Activated naive CD8-positive, alpha-beta T cell treated with anti-CD3 and anti-CD28 coated beads, Interleukin-2, amount 10 ng/mL, durations not matched to agents 7 days and 5 days (primary cell): ENCODE measurements at regions of chr22 and their contacts with region 1.

Region 1: GRCh38 chr22:46296257-46297150 is at the start of gene GTSE1:
- DNase-seq: peak; percentile 96
- ATAC-seq: peak; percentile 96
- H3K4me3 Mint-ChIP-seq: peak within 1 kb of the TSS; percentile 87
- H3K27ac Mint-ChIP-seq: peak within 1 kb of the TSS; percentile 97
- H3K4me1 Mint-ChIP-seq: peaks cover 56% of the 10 kb centered on the region
- H3K27me3 Mint-ChIP-seq: no peaks in the 10 kb centered on the region
- total RNA-seq, gene GTSE1: 64.9 to 73.8 TPM

Region 2: DNA sequence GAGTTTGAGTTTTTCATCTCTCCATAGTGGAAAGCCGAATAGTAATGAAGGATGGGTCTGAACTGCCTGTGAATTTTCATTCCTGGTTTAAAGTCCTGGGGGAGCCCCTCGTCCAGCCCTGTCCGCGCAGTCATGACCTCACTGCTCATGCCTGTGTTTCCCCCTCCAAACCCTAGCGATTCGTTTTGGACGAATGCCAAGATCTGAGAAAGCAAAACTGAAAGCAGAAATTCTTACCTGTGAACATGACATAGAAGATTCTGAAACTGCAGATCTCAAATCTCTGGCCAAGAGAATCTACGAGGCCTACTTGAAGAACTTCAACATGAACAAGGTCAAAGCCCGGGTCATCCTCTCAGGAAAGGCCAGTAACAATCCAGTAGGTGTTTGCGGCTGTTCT is 76.9 kb before region 1 on chr22:
- POLR2A ChIA-PET with region 1: no interaction called
- DNase-seq: no peak
- ATAC-seq: no peak
- H3K4me3 Mint-ChIP-seq: peak overlapping the region; percentile 47
- H3K27ac Mint-ChIP-seq: no peak overlapping the region
- H3K4me1 Mint-ChIP-seq: peaks cover 7% of the 10 kb centered on the region
- H3K27me3 Mint-ChIP-seq: no peaks in the 10 kb centered on the region

Region 3: GRCh38 chr22:46267431-46268279 is 28.8 kb before region 1 on chr22 and contains the start of gene TTC38:
- POLR2A ChIA-PET with region 1: interaction called, 12 read pairs
- DNase-seq: peak; percentile 76
- ATAC-seq: peak; percentile 87
- H3K4me3 Mint-ChIP-seq: peak within 1 kb of the TSS; percentile 92
- H3K27ac Mint-ChIP-seq: peak within 1 kb of the TSS; percentile 83
- H3K4me1 Mint-ChIP-seq: peaks cover 17% of the 10 kb centered on the region
- H3K27me3 Mint-ChIP-seq: peaks cover 28% of the 10 kb centered on the region
- total RNA-seq, gene TTC38: 24.3 to 25.0 TPM